ENCODE measurements at regions of chr3 and their contacts with region 1.

Region 1: DNA sequence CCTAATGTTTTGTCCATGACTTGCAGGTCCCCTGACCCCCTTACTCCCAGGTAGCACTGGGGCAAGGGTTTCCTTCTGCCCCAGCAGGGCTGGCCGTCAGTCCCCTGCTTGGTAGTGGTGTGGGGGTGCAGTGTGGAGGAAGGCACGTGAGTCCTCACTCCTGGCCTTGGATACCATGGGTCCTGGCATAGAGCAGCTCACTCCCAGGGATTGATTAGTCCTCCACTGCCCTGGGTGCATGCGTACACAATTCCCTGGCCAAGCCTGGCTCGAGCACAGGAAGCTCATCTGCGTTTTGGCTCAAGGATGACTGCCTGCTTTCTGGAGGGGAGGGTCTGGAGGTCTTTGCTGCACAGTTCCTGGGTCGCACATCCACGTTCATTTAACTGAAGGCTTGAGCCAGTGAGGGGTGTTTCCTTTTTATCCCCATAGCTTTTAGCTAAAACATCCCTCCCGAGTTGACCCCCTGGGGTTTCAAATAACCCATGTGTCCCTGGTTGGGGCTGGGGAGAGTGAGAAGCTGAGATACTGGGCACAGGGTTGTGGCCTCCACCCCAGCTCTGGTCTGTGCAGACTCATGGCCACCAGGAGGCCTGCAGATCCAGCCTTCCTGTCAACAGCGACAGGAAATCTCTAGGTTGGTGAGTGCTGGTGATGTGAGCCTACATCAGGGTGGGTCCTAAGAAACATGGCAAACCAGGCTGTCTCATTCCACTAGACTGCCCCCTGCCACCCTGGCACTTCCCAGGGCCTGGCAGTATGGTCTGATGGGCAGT is 11.5 kb downstream of the HEMK1 start:
- DNase-seq: no peak
- H3K4me3 ChIP-seq: no peak overlapping the region
- H3K27ac ChIP-seq: no peak overlapping the region
- H3K4me1 ChIP-seq: peaks cover 0 to 14% (median 5%) of the 10 kb centered on the region in 4 experiments
- H3K27me3 ChIP-seq: no peaks in the 10 kb centered on the region

Region 2: DNA sequence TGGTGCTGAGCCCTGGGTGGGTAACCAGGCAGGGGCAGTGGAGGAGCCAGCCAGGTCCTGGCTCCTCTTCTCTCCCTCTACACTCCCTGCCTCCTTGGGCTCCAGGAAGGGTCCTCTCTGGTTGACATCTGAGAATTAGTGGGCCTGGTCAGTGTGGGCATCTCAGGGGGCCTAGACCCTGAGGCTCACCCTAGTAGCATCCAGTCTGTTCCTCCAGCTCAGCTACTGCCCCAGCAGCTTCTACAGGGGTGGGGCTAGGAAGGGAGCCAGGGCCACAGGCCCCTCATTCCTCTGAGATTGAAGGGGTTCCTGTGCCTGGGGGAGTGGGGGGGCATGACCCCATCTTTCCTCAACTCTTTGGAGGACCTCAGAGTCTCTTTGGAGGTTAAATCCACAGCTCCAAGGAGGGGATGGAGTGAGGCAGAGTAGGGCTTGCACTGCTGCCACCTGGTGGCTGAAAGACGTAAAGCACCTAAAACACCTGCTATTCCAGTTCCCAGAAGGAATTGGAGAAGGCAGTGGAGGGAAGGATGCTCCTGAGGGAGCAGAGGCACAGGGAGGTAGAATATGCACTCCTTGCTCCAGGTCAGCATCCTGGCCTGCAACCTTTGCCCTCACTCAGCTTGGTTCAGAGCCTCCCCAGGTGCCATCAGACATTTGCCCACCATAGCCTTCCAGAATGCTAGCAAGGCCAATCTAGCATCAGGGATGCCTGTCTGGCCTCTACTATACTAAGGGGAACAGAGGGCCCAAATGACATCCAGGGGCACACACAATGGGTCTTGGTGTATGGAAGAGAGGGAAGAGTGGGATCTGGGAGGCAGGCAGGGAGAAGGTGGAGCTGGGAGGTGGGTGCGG is 38.5 kb before region 1 on chr3:
- CTCF ChIA-PET with region 1: no interaction called
- POLR2A ChIA-PET with region 1: no interaction called
- DNase-seq: peak; percentile 28 to 66 (median 50)
- H3K4me3 ChIP-seq: no peak overlapping the region
- H3K27ac ChIP-seq: no peak overlapping the region
- H3K4me1 ChIP-seq: peaks cover 0 to 2% (median 0%) of the 10 kb centered on the region in 4 experiments
- H3K27me3 ChIP-seq: peaks cover 0 to 14% (median 2%) of the 10 kb centered on the region in 5 experiments

Region 3: GRCh38 chr3:50568947-50569749 is 11.7 kb before region 1 on chr3 and contains the start of gene HEMK1:
- CTCF ChIA-PET with region 1: interaction called, 204 read pairs
- POLR2A ChIA-PET with region 1: interaction called, 3 read pairs
- DNase-seq: peak; percentile 92 to 93 (median 93)
- H3K4me3 ChIP-seq: peak within 1 kb of the TSS; percentile 69 to 98 (median 91)
- H3K27ac ChIP-seq: peak within 1 kb of the TSS; percentile 40 to 80
- H3K4me1 ChIP-seq: peaks cover 7 to 57% (median 47%) of the 10 kb centered on the region in 4 experiments
- H3K27me3 ChIP-seq: peaks cover 0 to 4% (median 0%) of the 10 kb centered on the region in 5 experiments